Activated CD4-positive, alpha-beta memory T cell treated with anti-CD3 and anti-CD28 coated beads for 36 hours (primary cell): ENCODE measurements at regions of chr14 and their contacts with region 1.

Region 1: GRCh38 chr14:68718023-68718995 is 74.6 kb downstream of the ZFP36L1 start:
- DNase-seq: peak; percentile 46
- H3K4me3 Mint-ChIP-seq: no peak overlapping the region
- H3K27ac Mint-ChIP-seq: no peak overlapping the region
- H3K4me1 Mint-ChIP-seq: peaks cover 40% of the 10 kb centered on the region
- H3K27me3 Mint-ChIP-seq: no peaks in the 10 kb centered on the region

Region 2: DNA sequence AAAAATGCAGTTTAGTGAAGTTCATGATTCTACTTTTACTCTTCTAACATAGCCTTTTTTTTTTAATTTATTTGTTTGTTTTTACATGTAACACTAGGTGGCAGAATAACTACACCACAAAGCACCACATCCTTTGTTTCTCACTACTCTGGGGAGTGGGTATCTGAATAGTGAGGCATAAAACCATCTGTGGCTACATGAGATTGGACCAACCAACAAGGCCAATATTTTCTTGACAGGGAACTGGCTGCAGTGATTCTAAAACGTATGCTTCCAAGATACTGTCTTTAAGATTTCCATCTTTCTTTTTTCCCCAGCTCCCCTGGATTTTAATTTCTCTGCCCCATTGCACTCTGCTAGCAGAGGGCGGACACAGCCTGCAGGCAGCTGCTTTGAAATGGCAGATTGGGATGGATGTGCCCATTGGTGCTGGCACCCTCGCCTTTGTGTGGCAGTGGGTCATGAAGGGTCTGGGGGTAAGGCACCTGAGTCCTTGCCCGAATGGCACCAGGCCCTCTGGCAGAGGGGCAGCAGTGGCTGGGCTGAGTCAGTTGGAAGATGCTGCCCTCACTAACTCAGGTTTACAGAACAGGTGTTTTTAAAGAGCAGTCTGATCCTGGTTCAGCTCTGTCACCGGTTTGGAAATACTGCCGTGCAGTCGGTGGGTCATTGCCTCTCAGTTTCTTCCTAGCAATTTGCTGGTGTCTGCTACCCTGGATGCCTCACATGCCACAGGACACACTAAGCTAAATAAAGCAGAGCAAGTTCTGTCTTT is 469.6 kb before region 1 on chr14:
- CTCF ChIA-PET with region 1: interaction called, 3 read pairs
- POLR2A ChIA-PET with region 1: no interaction called
- intact Hi-C with region 1: loop called (anchors 5 kb)
- DNase-seq: no peak
- H3K4me3 Mint-ChIP-seq: no peak overlapping the region
- H3K27ac Mint-ChIP-seq: no peak overlapping the region
- H3K4me1 Mint-ChIP-seq: peaks cover 36% of the 10 kb centered on the region
- H3K27me3 Mint-ChIP-seq: no peaks in the 10 kb centered on the region

Region 3: DNA sequence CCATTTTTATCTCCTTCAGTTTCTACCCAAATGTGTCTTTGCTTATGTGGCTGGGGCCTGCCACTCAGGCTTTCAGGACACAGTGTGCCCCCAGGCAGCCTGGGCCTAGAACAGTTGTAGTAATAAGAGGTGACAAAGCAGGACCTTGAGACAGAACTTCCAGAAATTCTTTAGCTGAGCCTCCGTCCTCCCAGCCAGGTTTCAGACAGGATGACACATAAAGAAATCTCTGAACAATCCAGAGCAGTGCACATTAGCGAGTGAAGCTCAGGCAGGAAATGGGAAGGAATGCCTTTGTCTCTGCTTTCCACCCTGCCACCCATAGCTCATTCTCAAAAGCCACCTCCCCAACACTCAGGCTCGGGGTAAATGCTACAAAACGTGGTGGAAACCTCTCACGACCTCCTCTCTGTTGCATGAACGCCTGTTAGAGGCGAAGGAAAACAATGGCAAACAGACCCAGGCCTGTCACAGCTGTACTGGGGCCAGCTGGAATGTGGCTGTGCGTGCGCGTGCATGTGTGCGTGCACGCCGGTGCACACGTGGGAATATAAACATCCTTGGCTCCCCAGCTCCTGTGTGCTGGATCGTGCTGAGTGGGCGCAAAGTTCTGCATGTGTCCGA is 212.2 kb before region 1 on chr14:
- CTCF ChIA-PET with region 1: no interaction called
- POLR2A ChIA-PET with region 1: no interaction called
- intact Hi-C with region 1: no loop called
- DNase-seq: no peak
- H3K4me3 Mint-ChIP-seq: no peak overlapping the region
- H3K27ac Mint-ChIP-seq: no peak overlapping the region
- H3K4me1 Mint-ChIP-seq: peaks cover 30% of the 10 kb centered on the region
- H3K27me3 Mint-ChIP-seq: no peaks in the 10 kb centered on the region

Region 4: GRCh38 chr14:68695326-68695768 is 23.0 kb before region 1 on chr14:
- CTCF ChIA-PET with region 1: interaction called, 3 read pairs
- POLR2A ChIA-PET with region 1: interaction called, 3 read pairs
- intact Hi-C with region 1: loop called (anchors 2 kb)
- DNase-seq: peak; percentile 72
- H3K4me3 Mint-ChIP-seq: no peak overlapping the region
- H3K27ac Mint-ChIP-seq: peak overlapping the region; percentile 55
- H3K4me1 Mint-ChIP-seq: peaks cover 17% of the 10 kb centered on the region
- H3K27me3 Mint-ChIP-seq: no peaks in the 10 kb centered on the region

Region 5: GRCh38 chr14:68734231-68734775 is 16.0 kb after region 1 on chr14:
- CTCF ChIA-PET with region 1: interaction called, 11 read pairs
- POLR2A ChIA-PET with region 1: interaction called, 5 read pairs
- intact Hi-C with region 1: loop called (anchors 1 kb)
- DNase-seq: peak; percentile 68
- H3K4me3 Mint-ChIP-seq: peak overlapping the region; percentile 28
- H3K27ac Mint-ChIP-seq: peak overlapping the region; percentile 86
- H3K4me1 Mint-ChIP-seq: peaks cover 35% of the 10 kb centered on the region
- H3K27me3 Mint-ChIP-seq: no peaks in the 10 kb centered on the region

Region 6: GRCh38 chr14:68884031-68885030 is 166.0 kb after region 1 on chr14:
- CTCF ChIA-PET with region 1: no interaction called
- POLR2A ChIA-PET with region 1: no interaction called
- intact Hi-C with region 1: no loop called
- DNase-seq: no peak
- H3K4me3 Mint-ChIP-seq: no peak overlapping the region
- H3K27ac Mint-ChIP-seq: no peak overlapping the region
- H3K4me1 Mint-ChIP-seq: no peaks in the 10 kb centered on the region
- H3K27me3 Mint-ChIP-seq: no peaks in the 10 kb centered on the region